ENCODE measurements at regions of chr5 and their contacts with region 1.

Region 1: GRCh38 chr5:151126199-151126645 is 31.4 kb downstream of the ANXA6 start:
- DNase-seq: peak in 1 of 2 donors; percentile 82
- H3K4me3 ChIP-seq: no peak overlapping the region
- H3K27ac ChIP-seq: no peak overlapping the region
- H3K4me1 ChIP-seq: peaks cover 0 to 11% of the 10 kb centered on the region in 2 donors
- H3K27me3 ChIP-seq: no peaks in the 10 kb centered on the region
- CTCF ChIP-seq: peak; percentile 69 to 78 (median 78)

Region 2: DNA sequence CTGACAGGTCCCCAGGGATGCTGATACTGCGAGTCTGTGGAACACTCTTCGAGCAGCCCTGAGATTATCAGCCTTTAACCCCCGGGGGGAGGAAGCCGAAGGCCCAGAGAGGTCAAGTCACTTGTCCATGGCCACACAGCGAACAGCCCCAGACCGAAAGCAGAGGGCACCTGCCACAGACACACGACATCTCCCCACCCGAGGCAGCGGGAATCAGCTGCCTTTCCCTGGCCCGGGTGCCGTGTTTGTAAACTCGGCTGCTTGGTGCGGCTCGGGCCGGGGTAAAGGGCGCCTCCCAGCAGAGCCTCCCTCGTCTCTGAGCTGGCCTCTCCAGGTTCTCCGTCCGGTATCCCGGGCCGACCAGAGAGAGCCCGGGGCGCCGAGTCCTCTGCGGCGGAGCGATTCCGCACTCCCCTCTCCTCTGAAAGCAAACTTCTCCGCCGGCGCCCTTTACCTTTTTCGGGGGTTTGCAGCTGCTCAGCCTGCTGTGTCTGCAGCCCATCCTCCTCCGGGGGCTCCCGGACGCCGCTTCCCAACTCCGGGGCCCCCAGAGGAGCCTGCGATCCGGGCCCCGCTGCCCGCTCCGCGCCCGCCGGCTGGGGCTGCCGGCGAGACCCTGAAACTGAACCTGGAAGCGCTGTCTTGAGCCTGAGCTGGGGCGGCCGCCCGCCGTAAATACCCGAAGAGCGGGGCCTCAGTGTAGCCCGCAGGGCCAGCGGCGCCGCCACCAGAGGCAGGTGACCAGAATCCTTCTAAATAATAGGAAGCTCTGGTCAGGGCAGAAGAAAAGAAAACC is 97.4 kb after region 1 on chr5 and contains the start of gene CCDC69:
- intact Hi-C with region 1: loop called (anchors 5 kb)
- DNase-seq: peak in 1 of 2 donors; percentile 88
- H3K4me3 ChIP-seq: peak within 1 kb of the TSS; percentile 71 to 73
- H3K27ac ChIP-seq: peak within 1 kb of the TSS; percentile 55 to 77
- H3K4me1 ChIP-seq: peaks cover 13 to 17% of the 10 kb centered on the region in 2 donors
- H3K27me3 ChIP-seq: no peaks in the 10 kb centered on the region
- CTCF ChIP-seq: peak in 1 of 3 experiments; percentile 33
- total RNA-seq, gene CCDC69: 101 TPM

Measured in ascending aorta (tissue), 2 donors.